ENCODE measurements at regions of chr13 and their contacts with region 1.

Region 1: GRCh38 chr13:88601949-88602348 is 930.8 kb downstream of the SLITRK5 start:
- DNase-seq: no peak
- H3K4me3 ChIP-seq: no peak overlapping the region
- H3K27ac ChIP-seq: no peak overlapping the region
- H3K4me1 ChIP-seq: no peaks in the 10 kb centered on the region
- H3K27me3 ChIP-seq: no peaks in the 10 kb centered on the region
- CTCF ChIP-seq: no peak

Region 2: GRCh38 chr13:87622971-87623370 is 979.0 kb before region 1 on chr13:
- CTCF ChIA-PET with region 1: no interaction called
- POLR2A ChIA-PET with region 1: no interaction called
- intact Hi-C with region 1: no loop called
- DNase-seq: no peak
- H3K4me3 ChIP-seq: no peak overlapping the region
- H3K27ac ChIP-seq: no peak overlapping the region
- H3K4me1 ChIP-seq: no peaks in the 10 kb centered on the region
- H3K27me3 ChIP-seq: no peaks in the 10 kb centered on the region
- CTCF ChIP-seq: no peak

Region 3: DNA sequence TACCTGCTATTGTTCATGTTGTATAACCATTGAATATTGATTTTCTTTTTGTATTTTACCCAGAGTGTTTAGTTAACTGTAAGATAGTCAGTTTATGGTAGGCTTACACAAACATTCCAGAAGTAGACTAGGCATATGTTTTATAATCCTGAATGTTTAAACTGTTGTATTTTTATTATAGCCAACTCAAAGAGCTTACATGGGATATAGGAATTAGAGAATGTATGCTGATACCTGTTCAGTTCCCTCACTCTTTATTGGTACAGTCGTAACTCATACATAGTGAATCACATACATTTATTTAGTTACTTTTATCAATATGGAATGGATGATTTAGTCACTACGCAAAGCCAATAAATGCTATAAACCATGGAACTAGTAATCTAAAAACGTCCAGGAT is 272.9 kb before region 1 on chr13:
- CTCF ChIA-PET with region 1: no interaction called
- POLR2A ChIA-PET with region 1: no interaction called
- intact Hi-C with region 1: no loop called
- DNase-seq: no peak
- H3K4me3 ChIP-seq: no peak overlapping the region
- H3K27ac ChIP-seq: no peak overlapping the region
- H3K4me1 ChIP-seq: no peaks in the 10 kb centered on the region
- H3K27me3 ChIP-seq: no peaks in the 10 kb centered on the region
- CTCF ChIP-seq: no peak

Region 4: GRCh38 chr13:88411696-88412095 is 190.3 kb before region 1 on chr13:
- CTCF ChIA-PET with region 1: no interaction called
- POLR2A ChIA-PET with region 1: interaction called, 10 read pairs
- intact Hi-C with region 1: no loop called
- DNase-seq: no peak
- H3K4me3 ChIP-seq: no peak overlapping the region
- H3K27ac ChIP-seq: no peak overlapping the region
- H3K4me1 ChIP-seq: no peaks in the 10 kb centered on the region
- H3K27me3 ChIP-seq: no peaks in the 10 kb centered on the region
- CTCF ChIP-seq: no peak

Region 5: DNA sequence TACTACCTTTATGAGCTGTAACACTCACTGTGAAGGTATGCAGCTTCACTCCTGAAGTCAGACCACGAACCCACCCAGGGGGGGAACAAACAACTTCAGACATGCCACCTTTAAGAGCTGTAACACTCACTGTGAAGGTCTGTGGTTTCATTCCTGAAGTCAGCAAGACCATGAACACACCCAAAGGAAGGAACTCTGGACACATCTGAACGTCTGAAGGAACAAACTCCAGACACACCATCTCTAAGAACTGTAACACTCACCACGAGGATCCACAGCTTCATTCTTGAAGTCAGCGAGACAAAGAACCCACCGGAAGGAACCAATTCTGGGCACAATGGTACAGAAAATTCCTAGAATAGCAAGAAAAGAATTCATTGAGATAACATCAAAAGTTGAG is 949.0 kb after region 1 on chr13:
- CTCF ChIA-PET with region 1: no interaction called
- POLR2A ChIA-PET with region 1: no interaction called
- intact Hi-C with region 1: no loop called
- DNase-seq: peak in 1 of 2 experiments; percentile 20
- H3K4me3 ChIP-seq: no peak overlapping the region
- H3K27ac ChIP-seq: no peak overlapping the region
- H3K4me1 ChIP-seq: no peaks in the 10 kb centered on the region
- H3K27me3 ChIP-seq: no peaks in the 10 kb centered on the region
- CTCF ChIP-seq: no peak

Measured in PC-9 (cell line).